Activated CD4-positive, alpha-beta T cell treated with anti-CD3 and anti-CD28 coated beads, Interleukin-2, amount 10 ng/mL, durations not matched to agents 24 days and 14 days (primary cell): ENCODE measurements at regions of chr12 and their contacts with region 1.

Region 1: GRCh38 chr12:45990468-45991283 is at the start of gene SCAF11:
- DNase-seq: peak; percentile 100
- H3K4me3 Mint-ChIP-seq: peak within 1 kb of the TSS; percentile 96
- H3K27ac Mint-ChIP-seq: peak within 1 kb of the TSS; percentile 99
- H3K4me1 Mint-ChIP-seq: peaks cover 42% of the 10 kb centered on the region
- H3K27me3 Mint-ChIP-seq: peaks cover 5% of the 10 kb centered on the region
- total RNA-seq, gene SCAF11: 126 and 140 TPM in 2 replicates

Region 2: DNA sequence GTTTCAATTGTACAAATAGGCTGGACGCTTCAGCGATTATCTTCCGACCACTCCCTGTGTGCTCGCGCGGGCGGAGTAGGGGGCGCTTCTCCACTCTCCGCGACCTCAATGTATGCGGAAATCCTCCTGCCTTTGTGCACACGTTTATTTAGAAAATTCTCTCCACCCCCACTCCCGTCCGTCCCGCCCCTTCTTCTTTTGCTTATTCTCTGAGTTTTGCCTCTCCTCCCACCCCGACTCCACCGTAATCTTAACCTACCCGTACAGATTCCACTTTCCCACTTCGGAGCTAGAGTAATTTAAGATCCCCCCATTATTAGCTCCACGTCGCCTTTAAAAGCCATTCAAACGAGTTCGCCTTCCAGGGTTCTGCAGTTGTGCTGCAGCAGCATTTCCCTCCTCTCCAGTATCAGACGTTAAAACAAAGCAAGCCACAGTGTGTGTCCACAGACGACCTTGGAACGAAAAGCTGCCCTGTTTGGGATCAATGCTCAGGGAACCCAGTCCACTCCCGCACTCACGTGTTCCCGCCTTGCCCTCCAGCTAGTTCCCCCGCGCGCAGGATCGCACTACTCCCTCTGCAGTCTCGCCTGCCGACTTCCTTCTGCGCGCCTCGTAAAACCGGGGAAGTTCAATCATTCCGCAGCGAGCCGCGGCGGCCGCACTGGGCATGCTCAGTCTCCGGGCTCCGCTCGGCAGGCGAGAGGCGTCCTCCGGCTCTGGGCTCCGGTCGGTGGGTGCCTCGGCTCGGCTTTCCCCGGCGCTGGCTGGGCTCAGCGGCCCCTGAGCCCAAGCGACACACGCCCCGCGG is 775.1 kb before region 1 on chr12 and contains the start of gene ANO6:
- intact Hi-C with region 1: loop called (anchors 5 kb)
- DNase-seq: peak; percentile 95
- H3K4me3 Mint-ChIP-seq: peak within 1 kb of the TSS; percentile 93
- H3K27ac Mint-ChIP-seq: peak within 1 kb of the TSS; percentile 90
- H3K4me1 Mint-ChIP-seq: peaks cover 30% of the 10 kb centered on the region
- H3K27me3 Mint-ChIP-seq: no peaks in the 10 kb centered on the region
- total RNA-seq, gene ANO6: 24.1 and 24.8 TPM in 2 replicates

Region 3: DNA sequence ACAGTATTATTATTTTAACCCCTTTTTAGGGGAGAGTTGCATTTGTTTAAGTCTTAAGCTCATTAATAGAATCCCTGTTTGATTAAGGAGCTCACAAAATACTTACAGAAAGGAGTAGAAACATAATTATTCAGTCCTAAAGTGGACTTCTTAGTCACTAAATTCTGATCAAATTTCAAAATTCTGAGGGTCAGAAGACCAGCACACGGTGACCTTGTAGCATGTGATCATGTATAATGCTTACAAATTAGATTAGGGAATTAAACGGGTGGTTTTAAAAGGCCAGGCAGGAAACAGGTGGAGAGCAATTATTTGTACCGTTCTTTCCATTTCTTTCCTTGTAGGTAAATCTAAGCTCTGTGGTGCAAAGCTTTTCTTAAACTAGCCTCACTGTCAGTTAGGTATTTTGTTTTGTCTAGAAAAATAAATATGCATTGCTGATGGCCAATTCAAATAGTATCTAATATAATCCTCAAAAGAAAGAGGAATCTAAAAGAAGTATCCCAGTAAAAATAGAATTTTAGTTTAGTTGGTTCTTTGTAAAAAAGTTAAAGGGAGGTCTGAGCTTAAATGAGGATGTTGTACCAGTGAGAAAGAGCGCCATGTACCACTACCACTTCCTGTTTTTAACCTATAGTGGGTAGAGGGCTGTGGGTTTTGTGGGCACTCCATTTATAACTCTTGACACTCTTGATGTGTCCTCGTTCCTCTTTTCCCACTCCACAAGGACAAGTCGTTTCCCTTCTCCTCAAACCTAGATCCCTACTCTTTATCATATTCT is 227.1 kb after region 1 on chr12:
- intact Hi-C with region 1: loop called (anchors 1 kb)
- DNase-seq: peak; percentile 92
- H3K4me3 Mint-ChIP-seq: peak overlapping the region; percentile 79
- H3K27ac Mint-ChIP-seq: peak overlapping the region; percentile 98
- H3K4me1 Mint-ChIP-seq: peaks cover 88% of the 10 kb centered on the region
- H3K27me3 Mint-ChIP-seq: no peaks in the 10 kb centered on the region

Region 4: DNA sequence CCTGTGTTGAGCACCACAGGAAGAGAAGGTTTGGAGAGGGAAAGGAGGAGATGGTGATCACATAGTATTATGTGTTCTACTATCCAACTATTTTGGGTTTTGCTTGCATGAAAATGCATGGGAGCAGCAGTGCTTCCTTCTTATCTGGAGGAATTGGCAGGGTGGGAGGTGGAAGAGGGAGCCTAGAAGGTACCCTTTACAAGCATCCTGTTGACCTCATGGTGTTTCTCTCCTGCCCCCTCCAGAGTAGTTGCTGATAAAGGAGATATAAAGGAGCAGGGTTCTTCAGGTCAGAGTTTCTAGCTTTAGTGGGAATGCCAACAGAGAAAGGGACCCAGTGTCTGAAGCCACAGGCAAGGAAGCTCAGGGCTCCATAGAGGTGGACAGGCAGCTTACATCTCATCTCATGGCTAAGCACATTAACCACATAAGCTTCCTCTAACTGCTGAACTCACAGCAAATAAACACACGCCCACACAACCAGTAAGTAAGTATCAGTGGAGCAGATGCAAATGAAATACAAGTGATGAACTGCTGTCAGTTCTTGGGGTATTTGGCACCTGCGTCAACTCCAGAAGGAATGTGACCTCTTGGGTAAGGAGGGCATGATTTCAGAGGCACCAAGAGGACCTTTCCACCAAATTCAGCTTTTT is 556.1 kb after region 1 on chr12:
- intact Hi-C with region 1: loop called (anchors 5 kb)
- DNase-seq: peak; percentile 79
- H3K4me3 Mint-ChIP-seq: peak overlapping the region; percentile 55
- H3K27ac Mint-ChIP-seq: peak overlapping the region; percentile 88
- H3K4me1 Mint-ChIP-seq: peaks cover 62% of the 10 kb centered on the region
- H3K27me3 Mint-ChIP-seq: no peaks in the 10 kb centered on the region

Region 5: DNA sequence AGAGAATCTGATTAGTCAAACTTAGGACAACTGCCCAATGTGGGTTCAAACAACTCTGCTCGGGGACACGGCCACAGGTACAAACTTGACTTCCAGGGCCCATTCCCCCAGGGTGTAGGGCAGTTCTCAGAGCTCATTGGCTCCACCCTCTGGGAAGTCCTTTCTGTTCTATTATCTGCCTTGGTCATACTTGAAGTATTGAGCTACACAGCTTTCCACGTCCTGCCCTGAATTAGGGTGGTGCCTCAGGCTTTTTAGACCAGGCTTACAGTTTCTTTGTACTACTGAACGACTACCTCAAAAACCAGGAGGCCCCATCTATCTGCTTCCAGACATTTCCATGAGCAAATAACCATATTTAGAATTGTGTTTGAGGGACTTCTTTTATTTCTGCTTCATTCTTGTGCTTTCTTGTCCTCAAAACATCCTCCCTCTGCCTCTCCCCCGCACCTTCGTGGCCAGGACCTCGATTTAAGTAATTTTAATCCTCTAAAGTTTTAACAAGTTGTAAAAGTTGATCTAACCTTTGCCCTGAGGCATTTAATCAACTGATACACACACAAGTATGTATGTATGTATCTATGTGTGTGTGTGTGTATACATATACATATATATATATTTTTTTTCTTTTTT is 1370.8 kb after region 1 on chr12:
- intact Hi-C with region 1: loop called (anchors 10 kb)
- DNase-seq: peak; percentile 88
- H3K4me3 Mint-ChIP-seq: peak overlapping the region; percentile 81
- H3K27ac Mint-ChIP-seq: peak overlapping the region; percentile 98
- H3K4me1 Mint-ChIP-seq: peaks cover 53% of the 10 kb centered on the region
- H3K27me3 Mint-ChIP-seq: no peaks in the 10 kb centered on the region